AG04449 (cell line): ENCODE measurements at regions of chr5 and their contacts with region 1.

Region 1: DNA sequence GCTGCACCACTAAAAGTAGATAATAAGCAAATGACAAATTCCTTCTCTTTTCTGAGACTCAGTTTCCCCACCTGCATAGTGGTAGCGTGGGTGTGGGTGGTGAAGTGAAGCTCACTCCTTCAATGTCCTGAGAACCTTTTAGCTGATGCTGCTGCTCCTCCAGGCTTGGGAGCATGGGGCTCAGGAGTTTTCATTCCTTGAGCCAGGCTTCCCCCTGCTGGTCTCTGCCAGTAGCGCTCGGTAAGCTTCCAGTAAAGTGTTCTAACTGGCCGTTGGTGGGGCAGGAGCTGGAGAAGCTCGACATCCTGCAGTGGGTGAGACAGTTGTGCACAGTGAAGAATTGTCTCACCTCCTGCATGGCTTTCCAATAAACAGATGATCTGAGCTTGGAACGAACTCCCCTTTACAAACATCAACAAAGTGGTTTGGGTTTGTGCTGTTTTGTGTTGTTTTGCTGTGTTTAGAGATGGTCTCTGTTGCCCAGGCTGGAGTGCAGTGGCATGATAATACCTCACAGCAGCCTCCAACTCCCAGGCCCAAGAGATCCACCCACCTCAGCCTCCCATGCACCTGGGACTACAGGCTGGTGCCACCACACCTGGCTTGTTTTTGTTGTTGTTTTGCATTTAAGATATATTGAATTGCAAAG is 34.6 kb downstream of the SPARC start:
- DNase-seq: no peak
- H3K4me3 ChIP-seq: no peak overlapping the region
- CTCF ChIP-seq: peak; percentile 93

Region 2: GRCh38 chr5:151126199-151126645 is 525.9 kb before region 1 on chr5:
- CTCF ChIA-PET with region 1: interaction called, 12 read pairs
- POLR2A ChIA-PET with region 1: no interaction called
- DNase-seq: no peak
- H3K4me3 ChIP-seq: no peak overlapping the region
- CTCF ChIP-seq: peak; percentile 85

Region 3: GRCh38 chr5:151223469-151224264 is 428.5 kb before region 1 on chr5 and contains the start of gene CCDC69:
- CTCF ChIA-PET with region 1: no interaction called
- POLR2A ChIA-PET with region 1: no interaction called
- DNase-seq: no peak
- H3K4me3 ChIP-seq: peak within 1 kb of the TSS; percentile 59
- CTCF ChIP-seq: peak; percentile 33

Region 4: DNA sequence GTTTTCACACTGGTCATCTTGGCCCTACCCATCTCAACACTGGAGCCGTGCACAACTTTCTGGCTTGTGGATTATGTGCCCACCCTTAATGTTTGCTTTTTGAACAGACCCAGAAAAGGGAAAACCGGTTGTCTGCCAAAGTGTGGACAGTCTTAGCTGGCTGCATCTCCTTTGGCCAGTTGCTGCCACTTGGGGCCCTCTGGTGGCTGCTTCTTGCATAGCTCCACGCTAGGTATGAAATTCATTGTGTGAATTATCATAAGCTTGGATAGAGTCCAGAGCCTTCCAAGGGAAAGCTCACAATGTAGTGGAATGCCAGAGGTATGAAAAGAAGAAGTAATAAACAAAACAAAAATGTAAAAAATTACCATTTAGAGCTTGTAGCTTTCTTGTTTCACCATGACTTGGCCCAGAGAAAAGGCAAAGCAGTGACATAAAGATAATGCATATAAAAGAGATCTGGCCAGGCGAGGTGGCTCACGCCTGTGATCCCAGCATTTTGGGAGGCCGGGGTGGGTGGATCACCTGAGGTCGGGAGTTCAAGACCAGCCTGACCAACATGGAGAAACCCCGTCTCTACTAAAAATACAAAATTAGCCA is 336.0 kb before region 1 on chr5:
- CTCF ChIA-PET with region 1: interaction called, 18 read pairs
- POLR2A ChIA-PET with region 1: no interaction called
- DNase-seq: peak; percentile 5
- H3K4me3 ChIP-seq: no peak overlapping the region
- CTCF ChIP-seq: peak; percentile 80

Region 5: DNA sequence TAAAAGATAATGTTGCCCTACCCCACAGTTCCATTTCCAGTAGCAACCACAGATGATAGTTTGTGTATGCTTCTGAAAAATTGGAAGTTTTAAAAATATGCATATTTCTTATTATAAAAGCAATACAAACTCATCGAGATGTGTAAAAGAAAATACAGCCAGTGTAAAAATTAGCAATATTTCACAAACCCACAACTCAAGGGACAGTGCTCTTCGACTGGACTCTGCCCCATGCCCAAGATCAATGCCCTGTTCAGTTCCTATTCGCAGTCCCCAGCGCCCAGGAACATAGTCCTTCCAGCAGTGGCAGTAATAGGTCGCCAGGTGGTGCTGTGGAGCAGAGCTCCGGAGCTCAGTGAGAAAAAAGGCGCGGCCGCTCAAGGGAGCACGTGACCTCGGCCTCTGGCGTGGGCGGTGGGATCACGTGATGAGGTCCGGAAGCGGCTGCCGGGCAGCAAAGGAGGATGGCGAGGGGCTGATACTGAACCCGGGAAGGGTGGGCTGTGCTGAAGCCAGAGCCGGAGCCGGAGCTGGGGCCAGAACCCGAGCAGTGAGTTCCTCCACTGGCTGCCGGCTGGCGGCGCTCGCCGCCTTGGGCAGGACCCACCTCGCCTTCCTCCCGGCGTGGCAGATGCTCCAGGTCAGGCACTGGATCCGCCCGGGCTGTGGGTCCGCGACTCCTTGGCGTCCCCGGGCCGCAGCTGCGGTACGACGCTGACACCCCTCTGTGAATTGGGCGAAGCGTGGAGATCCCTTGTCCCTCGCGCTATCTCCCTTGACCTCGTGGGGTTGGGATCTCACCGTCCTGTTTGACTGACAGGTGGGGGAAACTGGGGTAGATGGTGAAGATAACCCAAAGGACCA is 204.7 kb before region 1 on chr5 and contains the start of gene SLC36A1:
- CTCF ChIA-PET with region 1: interaction called, 52 read pairs
- POLR2A ChIA-PET with region 1: interaction called, 5 read pairs
- DNase-seq: no peak
- H3K4me3 ChIP-seq: peak within 1 kb of the TSS; percentile 96
- CTCF ChIP-seq: peak; percentile 93

Region 6: GRCh38 chr5:151463137-151464029 is 188.7 kb before region 1 on chr5:
- CTCF ChIA-PET with region 1: interaction called, 26 read pairs
- POLR2A ChIA-PET with region 1: no interaction called
- DNase-seq: no peak
- H3K4me3 ChIP-seq: no peak overlapping the region
- CTCF ChIP-seq: peak; percentile 14

Region 7: GRCh38 chr5:151509231-151509630 is 142.9 kb before region 1 on chr5:
- CTCF ChIA-PET with region 1: interaction called, 32 read pairs
- POLR2A ChIA-PET with region 1: no interaction called
- DNase-seq: no peak
- H3K4me3 ChIP-seq: no peak overlapping the region
- CTCF ChIP-seq: no peak

Region 8: DNA sequence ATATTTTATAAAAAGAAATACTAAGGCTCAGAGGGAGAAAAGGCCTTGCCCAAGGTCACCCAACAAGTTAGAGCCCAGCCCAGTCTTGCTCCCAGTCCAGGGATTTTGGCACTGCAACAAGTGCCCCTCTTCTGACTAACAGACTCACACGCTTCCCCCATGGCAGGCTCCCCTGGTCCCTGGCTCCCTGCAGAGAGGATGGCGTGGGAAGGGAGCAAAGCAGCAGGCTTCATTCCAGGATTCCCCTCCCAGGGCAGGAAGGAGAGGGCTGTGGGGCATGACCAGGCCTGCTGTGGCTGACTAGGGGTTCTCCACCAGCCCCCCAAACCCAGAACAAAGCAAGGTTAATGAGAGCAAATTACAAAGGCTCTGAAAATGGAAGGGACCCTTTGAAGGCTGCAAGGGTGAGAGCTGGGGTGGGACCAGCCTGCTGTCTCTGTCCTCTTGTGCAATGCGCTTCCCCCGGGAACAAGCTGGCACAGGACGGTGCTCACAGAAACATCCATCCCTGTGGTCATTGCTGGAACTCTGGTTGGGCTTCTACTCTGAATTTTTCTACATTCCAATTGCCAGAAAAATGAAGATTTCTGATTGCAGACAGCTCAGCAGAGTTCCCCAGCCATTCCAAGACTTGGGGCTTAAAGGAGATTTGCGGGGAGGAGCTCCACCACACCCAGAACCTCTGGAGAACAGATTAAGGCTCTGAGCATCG is 23.9 kb before region 1 on chr5:
- CTCF ChIA-PET with region 1: interaction called, 10 read pairs
- POLR2A ChIA-PET with region 1: no interaction called
- DNase-seq: peak; percentile 21
- H3K4me3 ChIP-seq: no peak overlapping the region
- CTCF ChIP-seq: no peak